AG04449 (cell line): ENCODE measurements at regions of chr12 and their contacts with region 1.

Region 1: DNA sequence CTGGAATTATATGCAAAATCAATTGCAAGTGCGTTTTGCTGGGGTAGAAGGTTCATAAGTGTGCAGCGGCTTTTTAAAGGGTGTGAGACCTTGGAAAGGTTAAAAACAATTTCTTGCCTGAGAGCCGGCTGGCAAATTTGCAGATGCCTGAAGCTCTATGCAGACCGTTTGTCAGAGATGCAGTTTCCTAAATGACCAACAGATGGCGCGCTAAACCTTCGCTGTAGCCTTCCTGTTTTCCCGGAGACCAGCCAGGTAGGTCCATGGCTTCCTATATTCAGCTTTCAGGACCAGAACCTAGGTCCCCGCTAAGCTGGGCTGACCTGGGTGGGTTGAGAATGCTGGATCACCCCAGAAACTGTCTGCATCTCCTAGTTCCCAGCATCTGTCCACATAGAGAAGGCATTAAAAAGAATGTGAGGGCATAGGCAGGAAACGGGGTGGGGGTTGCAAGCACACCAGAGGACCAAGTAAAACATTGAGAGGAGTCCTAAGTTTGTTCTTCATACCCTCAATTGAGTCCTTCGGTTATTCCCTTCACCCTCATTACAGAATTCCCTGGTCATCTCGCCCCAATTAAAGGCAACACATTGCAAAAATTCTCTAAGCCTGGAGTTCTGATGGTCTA is 5.7 kb upstream of the NOS1 start:
- DNase-seq: peak; percentile 12
- H3K4me3 ChIP-seq: no peak overlapping the region
- CTCF ChIP-seq: peak; percentile 83

Region 2: DNA sequence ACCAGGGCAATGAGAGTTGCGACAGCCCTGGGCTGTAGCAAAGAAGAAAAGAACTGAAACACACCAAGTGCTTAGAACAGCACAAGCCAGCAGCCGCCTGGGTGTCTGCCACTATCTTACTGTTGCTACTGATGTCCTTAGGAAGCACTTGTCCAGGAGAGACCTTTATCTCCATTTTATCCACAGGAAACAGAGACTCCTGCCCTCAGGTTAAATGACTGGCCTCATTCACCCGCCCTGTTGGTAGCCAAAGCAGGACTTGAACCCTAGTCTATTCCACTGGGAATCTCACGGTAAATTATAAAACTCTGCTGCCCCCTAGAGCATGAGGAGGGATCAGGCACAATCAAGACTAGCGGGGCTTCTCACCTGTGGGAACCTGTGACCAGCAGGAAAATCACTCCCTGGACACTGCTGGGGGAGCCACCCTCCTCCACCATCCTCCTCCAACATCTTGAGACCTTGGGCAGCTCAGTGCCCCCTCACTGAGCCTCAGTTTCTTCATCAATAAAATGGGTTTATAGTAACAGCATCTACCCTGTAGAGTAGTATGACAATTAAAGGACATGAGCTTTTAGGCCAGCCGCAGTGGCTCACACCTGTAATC is 247.4 kb before region 1 on chr12:
- CTCF ChIA-PET with region 1: no interaction called
- POLR2A ChIA-PET with region 1: no interaction called
- DNase-seq: no peak
- H3K4me3 ChIP-seq: no peak overlapping the region
- CTCF ChIP-seq: peak; percentile 14

Region 3: GRCh38 chr12:117236456-117237001 is 130.6 kb before region 1 on chr12:
- CTCF ChIA-PET with region 1: interaction called, 24 read pairs
- POLR2A ChIA-PET with region 1: no interaction called
- DNase-seq: no peak
- H3K4me3 ChIP-seq: no peak overlapping the region
- CTCF ChIP-seq: peak; percentile 64

Region 4: DNA sequence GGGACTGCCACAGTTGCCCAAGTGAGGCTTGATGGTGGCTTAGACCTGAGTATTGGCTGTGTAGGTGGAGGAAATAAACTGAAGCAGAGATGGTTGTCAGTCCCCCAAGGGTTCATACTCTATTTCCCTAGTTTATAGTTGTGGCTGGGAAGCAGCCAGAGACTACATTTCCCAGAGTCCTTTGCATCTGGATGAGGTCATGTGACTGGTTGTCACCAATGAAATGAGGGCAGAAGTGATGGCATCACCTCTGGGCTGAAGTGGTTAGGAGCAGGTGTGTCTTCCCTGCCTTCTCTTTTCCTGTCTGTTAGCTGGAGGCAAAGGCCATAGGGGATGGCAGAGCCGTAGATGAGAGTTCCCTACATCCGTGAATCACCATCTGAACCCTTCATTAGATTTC is 10.6 kb after region 1 on chr12:
- CTCF ChIA-PET with region 1: interaction called, 52 read pairs
- POLR2A ChIA-PET with region 1: no interaction called
- DNase-seq: no peak
- H3K4me3 ChIP-seq: no peak overlapping the region
- CTCF ChIP-seq: no peak

Region 5: GRCh38 chr12:117580718-117581062 is 213.6 kb after region 1 on chr12:
- CTCF ChIA-PET with region 1: interaction called, 131 read pairs
- POLR2A ChIA-PET with region 1: no interaction called
- DNase-seq: no peak
- H3K4me3 ChIP-seq: no peak overlapping the region
- CTCF ChIP-seq: no peak

Region 6: GRCh38 chr12:117671734-117672133 is 304.6 kb after region 1 on chr12:
- CTCF ChIA-PET with region 1: interaction called, 34 read pairs
- POLR2A ChIA-PET with region 1: no interaction called
- DNase-seq: no peak
- H3K4me3 ChIP-seq: no peak overlapping the region
- CTCF ChIP-seq: peak; percentile 64

Region 7: GRCh38 chr12:117857632-117858612 is 490.8 kb after region 1 on chr12:
- CTCF ChIA-PET with region 1: interaction called, 129 read pairs
- POLR2A ChIA-PET with region 1: no interaction called
- DNase-seq: no peak
- H3K4me3 ChIP-seq: no peak overlapping the region
- CTCF ChIP-seq: peak; percentile 50